Activated CD4-positive, alpha-beta T cell treated with anti-CD3 and anti-CD28 coated beads, Interleukin-2, amount 10 ng/mL, durations not matched to agents 7 days and 5 days (primary cell): ENCODE measurements at regions of chr2 and their contacts with region 1.

Region 1: DNA sequence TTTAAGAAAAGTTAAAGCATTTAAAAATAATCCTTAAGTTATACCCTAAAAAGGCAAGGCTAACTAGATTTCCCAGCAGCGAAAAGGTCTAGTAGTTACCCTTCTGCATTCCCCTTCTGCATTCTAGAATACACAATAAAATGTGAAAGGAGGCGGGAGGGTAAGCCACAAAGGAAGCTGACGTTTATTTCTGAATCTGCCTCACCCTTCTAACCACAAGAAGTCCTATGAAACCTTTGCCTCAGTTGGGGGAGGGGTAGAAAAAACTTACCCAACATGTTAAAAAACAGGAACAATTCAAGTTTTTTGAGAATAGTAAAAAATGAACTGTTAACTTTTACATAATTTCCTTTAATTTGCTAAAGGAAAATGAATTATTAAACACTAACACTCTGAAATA is 11.3 kb downstream of the STK17B start:
- DNase-seq: peak; percentile 86
- H3K4me3 Mint-ChIP-seq: peak overlapping the region; percentile 68
- H3K27ac Mint-ChIP-seq: peak overlapping the region; percentile 95
- H3K4me1 Mint-ChIP-seq: peaks cover 71% of the 10 kb centered on the region
- H3K27me3 Mint-ChIP-seq: no peaks in the 10 kb centered on the region

Region 2: DNA sequence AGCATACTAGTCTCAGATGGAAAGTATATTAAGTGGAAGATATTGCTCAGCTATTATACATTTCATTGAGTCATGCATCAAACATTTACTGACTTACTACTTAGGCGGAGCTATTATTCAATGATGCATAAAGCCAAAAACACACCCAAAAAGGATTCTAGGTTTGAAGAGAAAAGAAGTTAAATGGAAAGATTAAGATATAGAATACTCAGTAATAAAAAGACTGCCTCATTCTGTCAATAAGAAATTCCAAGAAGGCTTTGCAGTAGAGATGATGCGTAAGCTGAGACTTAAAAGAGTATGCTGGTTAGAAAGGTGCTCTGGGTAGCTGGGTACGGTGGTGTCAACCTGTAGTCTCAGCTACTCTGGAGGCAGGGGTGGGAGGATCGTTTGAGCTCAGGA is 16.4 kb before region 1 on chr2:
- CTCF ChIA-PET with region 1: interaction called, 11 read pairs
- POLR2A ChIA-PET with region 1: interaction called, 3 read pairs
- DNase-seq: no peak
- H3K4me3 Mint-ChIP-seq: no peak overlapping the region
- H3K27ac Mint-ChIP-seq: no peak overlapping the region
- H3K4me1 Mint-ChIP-seq: peaks cover 64% of the 10 kb centered on the region
- H3K27me3 Mint-ChIP-seq: no peaks in the 10 kb centered on the region

Region 3: GRCh38 chr2:196277002-196277401 is 116.9 kb after region 1 on chr2:
- CTCF ChIA-PET with region 1: interaction called, 12 read pairs
- POLR2A ChIA-PET with region 1: interaction called, 7 read pairs
- DNase-seq: peak; percentile 55
- H3K4me3 Mint-ChIP-seq: peak overlapping the region; percentile 22
- H3K27ac Mint-ChIP-seq: peak overlapping the region; percentile 21
- H3K4me1 Mint-ChIP-seq: peaks cover 49% of the 10 kb centered on the region
- H3K27me3 Mint-ChIP-seq: no peaks in the 10 kb centered on the region